Breast epithelium (tissue), 4 donors: ENCODE measurements at regions of chr2 and their contacts with region 1.

Region 1: GRCh38 chr2:234467289-234467688 is 29.6 kb downstream of the ARL4C start:
- DNase-seq: no peak
- H3K4me3 ChIP-seq: no peak overlapping the region
- H3K27ac ChIP-seq: no peak overlapping the region
- H3K4me1 ChIP-seq: no peaks in the 10 kb centered on the region
- H3K27me3 ChIP-seq: no peaks in the 10 kb centered on the region
- CTCF ChIP-seq: no peak
- POLR2A ChIP-seq: no peak

Region 2: DNA sequence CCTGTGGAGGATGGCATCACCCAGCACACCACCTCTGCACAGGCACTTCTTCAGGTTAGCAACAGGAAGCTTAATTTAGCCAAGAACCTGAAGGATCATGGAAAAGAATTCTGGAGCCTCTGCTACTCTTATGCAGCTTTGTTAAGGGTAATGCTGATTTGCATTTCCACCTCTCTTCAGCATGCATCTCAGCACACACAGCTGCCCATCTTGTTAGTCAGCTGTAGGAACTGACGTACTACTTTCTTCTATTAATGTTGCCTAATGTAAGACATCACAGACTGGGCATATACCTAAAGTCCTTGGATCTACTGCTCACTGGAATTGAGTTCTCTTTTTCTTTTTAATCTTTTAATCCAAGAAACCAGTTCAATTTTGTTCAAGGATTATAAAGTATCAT is 235.8 kb before region 1 on chr2:
- intact Hi-C with region 1: loop called (anchors 5 kb)
- DNase-seq: no peak
- H3K4me3 ChIP-seq: no peak overlapping the region
- H3K27ac ChIP-seq: no peak overlapping the region
- H3K4me1 ChIP-seq: no peaks in the 10 kb centered on the region
- H3K27me3 ChIP-seq: no peaks in the 10 kb centered on the region
- CTCF ChIP-seq: no peak
- POLR2A ChIP-seq: no peak

Region 3: DNA sequence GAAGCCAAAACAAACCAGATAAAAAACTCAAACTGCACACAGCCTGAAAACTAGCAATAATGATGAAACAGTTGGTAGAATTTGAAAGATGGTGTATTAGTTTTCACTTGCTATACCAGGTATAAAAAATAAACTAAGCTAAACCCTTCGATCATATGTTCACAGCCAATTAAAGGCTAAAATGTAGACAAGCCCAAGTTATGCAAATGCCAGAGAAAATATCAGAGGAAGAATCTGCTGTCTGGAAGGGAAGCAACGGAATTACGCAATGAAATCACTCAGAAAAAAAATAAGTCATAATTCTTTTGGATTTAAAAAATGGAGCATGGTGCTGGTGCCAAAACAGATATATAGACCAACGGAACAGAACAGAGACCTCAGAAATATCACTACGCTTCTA is 78.7 kb before region 1 on chr2:
- intact Hi-C with region 1: no loop called
- DNase-seq: no peak
- H3K4me3 ChIP-seq: no peak overlapping the region
- H3K27ac ChIP-seq: no peak overlapping the region
- H3K4me1 ChIP-seq: no peaks in the 10 kb centered on the region
- H3K27me3 ChIP-seq: no peaks in the 10 kb centered on the region
- CTCF ChIP-seq: no peak
- POLR2A ChIP-seq: no peak